ENCODE measurements at regions of chr12 and their contacts with region 1.

Region 1: GRCh38 chr12:114457620-114458019 is 51.7 kb upstream of the TBX5 start:
- DNase-seq: no peak
- ATAC-seq: no peak
- H3K4me3 ChIP-seq: no peak overlapping the region
- H3K27ac ChIP-seq: no peak overlapping the region
- H3K4me1 ChIP-seq: no peaks in the 10 kb centered on the region
- H3K27me3 ChIP-seq: peaks cover 0 to 58% (median 37%) of the 10 kb centered on the region in 7 donors
- CTCF ChIP-seq: no peak

Region 2: DNA sequence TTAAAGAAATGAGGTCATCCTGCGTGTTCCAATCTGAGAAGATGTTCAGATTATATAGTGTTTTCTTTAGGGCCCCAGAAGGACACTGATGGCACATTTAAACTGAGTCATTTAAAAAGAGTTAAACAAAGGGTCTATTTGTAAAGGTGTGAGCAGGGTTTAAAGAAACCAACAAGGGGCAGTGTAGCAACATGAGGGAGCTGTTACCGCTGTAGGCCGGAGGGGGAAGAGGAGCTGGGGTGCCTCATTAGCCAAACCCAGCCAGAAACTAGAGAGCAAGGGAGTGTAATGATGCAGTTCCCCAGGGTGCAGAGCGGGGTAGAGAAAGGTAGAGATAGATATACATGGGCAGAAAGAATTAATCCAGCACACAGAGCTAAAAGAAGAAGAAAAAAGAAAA is 212.1 kb before region 1 on chr12:
- intact Hi-C with region 1: loop called in 1 of 10 experiments (anchors 10 kb)
- DNase-seq: no peak
- ATAC-seq: peak in 4 of 8 donors; percentile 35 to 78 (median 43)
- H3K4me3 ChIP-seq: no peak overlapping the region
- H3K27ac ChIP-seq: no peak overlapping the region
- H3K4me1 ChIP-seq: peaks cover 0 to 4% (median 0%) of the 10 kb centered on the region in 9 donors
- H3K27me3 ChIP-seq: peaks cover 0 to 18% (median 9%) of the 10 kb centered on the region in 7 donors
- CTCF ChIP-seq: peak in 6 of 9 donors; percentile 9 to 49 (median 36)

Region 3: GRCh38 chr12:114604606-114605005 is 147.0 kb after region 1 on chr12:
- intact Hi-C with region 1: no loop called
- DNase-seq: no peak
- ATAC-seq: no peak
- H3K4me3 ChIP-seq: no peak overlapping the region
- H3K27ac ChIP-seq: no peak overlapping the region
- H3K4me1 ChIP-seq: no peaks in the 10 kb centered on the region
- H3K27me3 ChIP-seq: peaks cover 0 to 18% (median 0%) of the 10 kb centered on the region in 7 donors
- CTCF ChIP-seq: no peak

Region 4: GRCh38 chr12:114729731-114730130 is 272.1 kb after region 1 on chr12:
- intact Hi-C with region 1: no loop called
- DNase-seq: no peak
- ATAC-seq: no peak
- H3K4me3 ChIP-seq: no peak overlapping the region
- H3K27ac ChIP-seq: no peak overlapping the region
- H3K4me1 ChIP-seq: peaks cover 0 to 5% (median 0%) of the 10 kb centered on the region in 9 donors
- H3K27me3 ChIP-seq: peaks cover 6 to 23% (median 20%) of the 10 kb centered on the region in 7 donors
- CTCF ChIP-seq: no peak

Region 5: GRCh38 chr12:114858383-114859146 is 400.9 kb after region 1 on chr12:
- intact Hi-C with region 1: no loop called
- DNase-seq: no peak
- ATAC-seq: no peak
- H3K4me3 ChIP-seq: no peak overlapping the region
- H3K27ac ChIP-seq: no peak overlapping the region
- H3K4me1 ChIP-seq: no peaks in the 10 kb centered on the region
- H3K27me3 ChIP-seq: peaks cover 0 to 5% (median 0%) of the 10 kb centered on the region in 7 donors
- CTCF ChIP-seq: peak in 1 of 9 donors; percentile 6

Measured in heart right ventricle (tissue), 16 donors.